B cell (primary cell): ENCODE measurements at regions of chr20 and their contacts with region 1.

Region 1: GRCh38 chr20:35883778-35884540 is 70.3 kb downstream of the SCAND1 start:
- DNase-seq: peak; percentile 68
- ATAC-seq: peak; percentile 84
- H3K4me3 ChIP-seq: no peak overlapping the region
- H3K4me3 Mint-ChIP-seq: no peak overlapping the region
- H3K27ac ChIP-seq: peak overlapping the region in 1 of 2 donors; percentile 16
- H3K27ac Mint-ChIP-seq: peak overlapping the region; percentile 22
- H3K4me1 ChIP-seq: no peaks in the 10 kb centered on the region
- H3K4me1 Mint-ChIP-seq: peaks cover 7% of the 10 kb centered on the region
- H3K27me3 ChIP-seq: no peaks in the 10 kb centered on the region
- H3K27me3 Mint-ChIP-seq: no peaks in the 10 kb centered on the region
- CTCF ChIP-seq: peak; percentile 72

Region 2: DNA sequence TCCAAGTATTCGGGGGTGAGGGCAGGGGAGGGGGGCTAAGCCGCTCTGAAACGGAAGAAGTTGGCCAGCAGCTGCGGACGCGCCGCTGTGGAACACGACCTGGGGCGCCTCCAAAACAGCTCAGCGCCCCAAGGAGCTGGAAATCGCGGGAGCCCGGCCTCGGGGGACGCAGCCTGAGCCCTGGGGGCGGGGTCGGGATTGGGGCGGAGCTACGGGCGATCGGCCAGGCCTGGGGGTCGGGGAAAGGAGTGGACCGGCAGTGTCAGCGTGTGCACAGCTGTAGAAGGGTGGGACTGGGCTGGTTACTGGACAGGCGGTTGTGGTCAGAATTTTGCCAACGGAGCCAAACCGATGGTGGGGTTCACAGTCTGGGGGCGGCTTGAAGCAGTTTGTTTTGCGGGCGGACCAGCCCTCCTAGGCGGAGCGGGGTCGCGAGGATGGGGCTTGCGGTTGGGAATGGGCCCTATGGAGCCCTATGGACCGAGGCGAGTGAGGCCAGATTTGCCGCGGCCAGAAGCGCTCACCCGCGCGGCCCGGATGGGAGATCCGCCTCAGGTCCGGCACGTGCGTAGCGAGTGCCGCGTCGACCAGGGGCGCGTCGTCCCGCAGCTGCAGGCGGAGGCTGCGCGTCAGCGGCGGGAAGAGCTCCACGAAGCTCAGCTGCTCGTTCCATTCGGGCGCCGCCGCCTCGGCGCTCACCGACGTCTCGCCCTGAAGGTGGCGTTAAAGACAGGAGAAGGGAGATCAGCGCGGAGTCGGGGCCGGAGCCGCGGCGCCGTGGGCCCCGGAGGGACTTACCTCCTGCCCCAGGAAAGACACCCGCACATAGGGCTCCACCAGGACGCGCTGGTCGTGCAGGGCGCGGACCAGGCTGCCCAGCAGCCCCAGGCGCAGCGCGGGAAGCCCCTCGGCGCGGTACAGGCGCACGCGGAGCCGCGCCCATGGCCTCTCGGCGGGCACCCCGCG is 282.7 kb before region 1 on chr20:
- CTCF ChIA-PET with region 1: interaction called, 7 read pairs
- POLR2A ChIA-PET with region 1: no interaction called
- intact Hi-C with region 1: loop called (anchors 1 kb)
- DNase-seq: peak; percentile 88
- ATAC-seq: peak; percentile 78
- H3K4me3 ChIP-seq: peak overlapping the region in 4 of 5 experiments; percentile 40 to 77 (median 58)
- H3K4me3 Mint-ChIP-seq: peak overlapping the region; percentile 89
- H3K27ac ChIP-seq: no peak overlapping the region
- H3K27ac Mint-ChIP-seq: no peak overlapping the region
- H3K4me1 ChIP-seq: peaks cover 16 to 17% of the 10 kb centered on the region in 2 donors
- H3K4me1 Mint-ChIP-seq: peaks cover 12% of the 10 kb centered on the region
- H3K27me3 ChIP-seq: peaks cover 0 to 40% (median 15%) of the 10 kb centered on the region in 4 experiments
- H3K27me3 Mint-ChIP-seq: peaks cover 44% of the 10 kb centered on the region
- CTCF ChIP-seq: peak; percentile 48